ENCODE measurements at regions of chr3 and their contacts with region 1.

Region 1: DNA sequence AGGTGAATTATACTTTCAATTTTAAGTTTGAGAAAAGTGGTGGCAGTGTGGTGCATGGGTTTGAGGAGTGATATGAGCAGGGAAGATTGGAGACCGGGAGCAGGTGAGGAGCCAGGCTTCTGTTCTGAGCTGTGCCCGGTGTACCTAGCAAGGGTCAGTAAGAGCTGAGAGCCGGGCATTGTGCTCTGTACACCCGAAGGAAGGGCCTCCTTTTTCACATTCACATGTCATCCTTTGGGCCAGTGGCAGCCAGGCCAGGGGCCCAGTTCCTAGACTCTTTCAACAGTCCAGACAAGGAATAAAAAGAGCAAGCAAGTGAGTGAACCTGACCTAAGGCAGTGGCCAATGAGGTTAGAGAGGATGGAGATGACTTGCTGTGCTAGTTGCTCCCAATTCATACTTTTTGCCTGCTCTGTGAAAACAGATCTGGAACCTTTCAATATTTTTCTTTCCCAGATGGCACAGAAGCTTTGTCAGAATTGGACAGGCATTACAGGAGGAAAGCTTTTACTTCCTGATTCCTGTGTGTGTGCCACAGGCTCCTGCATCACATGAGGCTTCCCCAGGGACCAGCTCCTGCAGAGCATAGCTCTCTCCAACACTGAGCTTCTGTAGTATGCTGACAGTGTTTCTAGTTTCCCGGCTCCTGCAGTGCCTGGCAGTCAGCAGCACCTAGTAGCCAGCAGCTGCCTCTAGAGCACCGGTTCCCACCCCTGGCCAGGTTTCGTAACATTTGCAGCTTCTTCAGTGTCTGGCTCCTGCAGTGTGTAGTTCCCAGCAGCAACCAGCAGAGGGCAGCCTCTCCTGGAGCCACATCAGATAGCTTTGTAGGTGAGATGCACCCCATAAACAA is 5.3 kb upstream of the TRA2B start:
- DNase-seq: peak; percentile 90
- H3K4me3 Mint-ChIP-seq: no peak overlapping the region
- H3K27ac Mint-ChIP-seq: no peak overlapping the region
- H3K4me1 Mint-ChIP-seq: peaks cover 23% of the 10 kb centered on the region
- H3K27me3 Mint-ChIP-seq: no peaks in the 10 kb centered on the region
- CTCF ChIP-seq: peak; percentile 99

Region 2: DNA sequence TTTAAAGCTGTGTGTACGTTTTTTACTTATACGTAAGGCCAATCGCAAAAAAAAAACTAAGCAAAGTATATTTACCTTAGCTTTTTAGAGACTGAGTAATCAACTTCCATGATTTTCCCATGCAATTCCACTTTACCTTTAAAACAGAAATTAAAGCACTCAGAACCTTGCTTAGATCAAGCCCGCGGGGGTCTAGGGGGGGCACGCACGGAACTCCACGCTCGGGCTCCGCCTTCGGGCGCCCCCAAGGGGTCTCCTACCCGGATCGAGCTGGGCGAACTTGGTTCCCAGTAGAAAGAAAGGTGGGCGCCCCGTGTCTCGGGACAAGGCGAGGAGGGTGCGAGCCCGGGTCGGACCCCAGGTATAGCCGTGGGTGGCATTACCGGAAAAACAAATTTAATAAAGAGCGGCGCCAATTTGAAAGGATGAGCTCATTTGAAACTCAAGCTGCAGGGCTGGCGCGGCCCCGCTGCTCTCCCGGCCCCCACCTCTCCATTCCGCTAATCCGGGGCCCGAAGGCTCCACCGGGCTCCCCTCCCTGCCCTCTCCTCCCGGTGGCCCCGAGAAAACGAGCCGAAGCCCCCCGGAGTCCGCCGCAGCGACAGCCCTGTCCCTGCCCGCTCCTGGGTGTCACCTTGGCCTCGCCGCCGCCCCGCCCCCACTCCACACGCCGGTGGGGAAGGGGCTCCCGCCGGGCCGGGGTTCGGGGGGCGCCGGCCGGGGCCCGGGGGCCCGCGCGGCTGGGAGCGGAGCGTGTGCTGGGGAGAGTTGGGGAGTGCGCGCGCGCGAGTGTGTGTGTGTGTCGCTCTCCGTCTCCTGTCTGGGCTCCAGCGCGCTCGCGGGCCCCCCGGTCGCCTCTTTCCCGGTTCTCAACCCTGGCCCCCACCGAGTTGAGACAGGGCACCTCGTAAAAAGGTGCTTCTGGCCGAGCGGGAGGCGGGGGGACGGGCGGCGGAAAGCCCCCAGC is 119.8 kb before region 1 on chr3:
- CTCF ChIA-PET with region 1: interaction called, 13 read pairs
- intact Hi-C with region 1: no loop called
- DNase-seq: peak; percentile 56
- H3K4me3 Mint-ChIP-seq: peak overlapping the region; percentile 75
- H3K27ac Mint-ChIP-seq: peak overlapping the region; percentile 98
- H3K4me1 Mint-ChIP-seq: peaks cover 47% of the 10 kb centered on the region
- H3K27me3 Mint-ChIP-seq: no peaks in the 10 kb centered on the region
- CTCF ChIP-seq: no peak

Region 3: GRCh38 chr3:185959609-185960517 is 16.7 kb after region 1 on chr3:
- CTCF ChIA-PET with region 1: interaction called, 130 read pairs
- intact Hi-C with region 1: no loop called
- DNase-seq: peak; percentile 65
- H3K4me3 Mint-ChIP-seq: no peak overlapping the region
- H3K27ac Mint-ChIP-seq: no peak overlapping the region
- H3K4me1 Mint-ChIP-seq: peaks cover 10% of the 10 kb centered on the region
- H3K27me3 Mint-ChIP-seq: no peaks in the 10 kb centered on the region
- CTCF ChIP-seq: no peak

Region 4: DNA sequence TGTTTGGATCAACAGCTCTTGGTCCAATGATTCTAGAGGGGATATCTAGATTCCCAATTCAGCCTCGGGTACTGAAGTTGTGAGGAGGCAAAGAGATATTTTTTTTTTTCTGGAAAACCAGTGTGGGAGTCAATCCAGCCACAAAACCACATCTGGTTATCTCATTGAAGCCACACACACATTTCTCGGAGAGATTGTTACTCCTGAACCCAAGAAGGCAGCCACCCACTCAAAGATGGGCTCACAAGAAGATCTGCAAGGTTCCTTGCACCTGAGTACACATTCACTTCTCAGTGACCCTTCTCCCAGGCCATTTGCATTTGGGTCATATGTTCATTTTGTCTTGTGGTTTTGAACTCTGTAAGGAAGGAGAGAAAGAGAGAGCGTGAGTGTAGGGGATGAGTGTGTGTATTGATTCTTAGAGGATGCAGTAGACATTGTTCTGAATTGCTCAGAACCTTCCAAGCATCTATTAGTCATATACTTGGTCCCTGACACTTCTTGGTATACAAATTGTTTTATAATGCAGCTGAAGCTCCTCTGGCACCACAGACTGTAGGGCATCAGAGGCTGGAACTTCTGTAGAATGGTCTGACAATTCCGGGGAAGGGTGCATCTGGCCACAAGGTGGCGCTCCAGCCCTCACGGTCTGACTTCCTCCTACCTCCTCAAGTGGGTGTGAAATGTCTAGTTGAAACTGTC is 34.0 kb after region 1 on chr3:
- CTCF ChIA-PET with region 1: interaction called, 19 read pairs
- intact Hi-C with region 1: no loop called
- DNase-seq: peak; percentile 91
- H3K4me3 Mint-ChIP-seq: no peak overlapping the region
- H3K27ac Mint-ChIP-seq: no peak overlapping the region
- H3K4me1 Mint-ChIP-seq: peaks cover 9% of the 10 kb centered on the region
- H3K27me3 Mint-ChIP-seq: no peaks in the 10 kb centered on the region
- CTCF ChIP-seq: peak; percentile 99

Region 5: GRCh38 chr3:186241910-186242821 is 299.0 kb after region 1 on chr3:
- CTCF ChIA-PET with region 1: interaction called, 11 read pairs
- intact Hi-C with region 1: no loop called
- DNase-seq: peak; percentile 94
- H3K4me3 Mint-ChIP-seq: peak overlapping the region; percentile 70
- H3K27ac Mint-ChIP-seq: peak overlapping the region; percentile 57
- H3K4me1 Mint-ChIP-seq: peaks cover 14% of the 10 kb centered on the region
- H3K27me3 Mint-ChIP-seq: peaks cover 15% of the 10 kb centered on the region
- CTCF ChIP-seq: peak; percentile 87

Measured in Calu3 (cell line).